Activated CD8-positive, alpha-beta memory T cell treated with anti-CD3 and anti-CD28 coated beads, Interleukin-2, amount 10 ng/mL, durations not matched to agents 7 days and 5 days (primary cell): ENCODE measurements at regions of chr6 and their contacts with region 1.

Region 1: DNA sequence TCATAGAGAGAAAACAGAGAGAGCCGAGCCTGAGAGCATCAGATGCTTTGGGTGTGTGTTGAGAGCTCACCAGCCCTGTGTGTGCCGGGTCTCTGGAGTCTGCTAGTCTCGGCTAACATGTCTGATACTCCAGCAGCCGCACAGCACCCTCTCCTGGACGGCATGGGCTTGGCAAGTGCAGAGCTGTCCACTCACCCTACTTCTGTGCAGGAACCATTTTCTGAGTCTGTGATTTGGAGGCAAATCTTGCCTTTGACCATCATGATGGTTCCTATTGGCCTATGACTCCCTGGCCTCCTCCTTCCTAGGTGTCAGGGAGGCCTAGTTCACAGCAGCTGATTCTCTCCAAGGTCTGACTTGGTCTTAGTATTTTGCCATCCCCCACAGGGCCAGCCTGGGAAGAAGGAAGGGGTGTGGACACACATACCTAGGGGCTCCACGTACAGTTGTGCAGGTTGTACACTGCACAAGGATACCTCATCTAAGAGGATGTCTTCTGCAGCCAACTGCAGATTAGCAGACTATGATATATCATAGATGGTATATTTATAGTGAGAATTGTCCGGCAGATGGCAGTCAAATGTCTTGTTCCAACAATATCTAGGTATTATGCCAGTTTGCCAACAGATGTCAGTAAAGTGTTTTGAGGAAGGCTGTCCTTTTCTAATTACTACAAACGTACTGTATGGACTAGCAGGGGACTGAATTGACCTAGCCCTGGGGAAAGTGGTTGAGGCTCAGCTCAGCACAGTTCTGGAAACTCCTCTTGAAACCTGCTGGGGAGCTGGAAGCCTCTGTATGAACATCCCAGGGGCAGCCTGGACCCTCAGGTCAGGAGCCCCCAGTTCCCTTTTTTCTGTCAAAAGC is 13.0 kb downstream of the FGD2 start:
- DNase-seq: peak; percentile 97
- ATAC-seq: peak; percentile 97
- H3K4me3 Mint-ChIP-seq: peak overlapping the region; percentile 5
- H3K27ac Mint-ChIP-seq: peak overlapping the region; percentile 80
- H3K4me1 Mint-ChIP-seq: peaks cover 52% of the 10 kb centered on the region
- H3K27me3 Mint-ChIP-seq: no peaks in the 10 kb centered on the region

Region 2: DNA sequence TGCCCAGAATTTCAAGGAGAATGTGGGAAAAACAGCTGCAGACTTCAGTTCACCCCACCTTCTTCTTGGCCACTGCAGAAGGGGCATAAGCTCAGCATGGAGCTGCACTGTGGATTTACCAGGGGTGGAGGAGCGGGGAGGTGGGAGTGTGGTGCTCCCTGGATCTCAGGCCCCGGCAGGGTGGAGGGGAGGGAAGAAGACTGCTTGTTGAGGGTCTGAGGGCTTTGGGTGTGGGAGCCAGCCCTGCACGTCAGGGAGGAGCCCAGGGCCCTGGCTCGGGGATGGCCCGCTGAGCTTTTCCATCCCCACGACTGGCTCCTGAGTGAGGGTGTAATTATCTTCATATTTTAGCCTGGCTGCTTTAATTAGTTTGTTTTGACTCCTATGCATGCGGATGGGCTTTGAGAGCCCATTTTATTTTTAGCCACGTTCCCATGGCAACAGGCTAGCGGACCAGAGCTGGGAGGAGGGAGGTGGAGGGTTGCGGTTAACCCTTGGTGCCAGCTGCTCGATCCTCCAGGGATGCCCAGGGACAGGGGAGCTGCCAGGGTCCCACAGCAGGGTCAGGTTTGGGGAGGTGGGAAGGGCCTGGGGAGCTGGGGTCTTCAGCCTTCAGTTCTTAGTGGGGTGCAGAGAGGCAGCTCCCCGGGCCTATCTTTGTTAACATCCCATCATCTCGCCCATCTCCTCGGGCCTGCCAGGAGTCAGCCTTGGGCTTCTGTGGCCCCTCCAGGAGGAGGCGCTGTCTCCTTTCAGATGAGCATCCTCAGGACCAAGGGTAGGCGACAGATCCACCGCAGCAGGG is 252.6 kb before region 1 on chr6:
- CTCF ChIA-PET with region 1: interaction called, 121 read pairs
- DNase-seq: peak; percentile 90
- ATAC-seq: peak; percentile 93
- H3K4me3 Mint-ChIP-seq: no peak overlapping the region
- H3K27ac Mint-ChIP-seq: no peak overlapping the region
- H3K4me1 Mint-ChIP-seq: peaks cover 37% of the 10 kb centered on the region
- H3K27me3 Mint-ChIP-seq: no peaks in the 10 kb centered on the region

Region 3: DNA sequence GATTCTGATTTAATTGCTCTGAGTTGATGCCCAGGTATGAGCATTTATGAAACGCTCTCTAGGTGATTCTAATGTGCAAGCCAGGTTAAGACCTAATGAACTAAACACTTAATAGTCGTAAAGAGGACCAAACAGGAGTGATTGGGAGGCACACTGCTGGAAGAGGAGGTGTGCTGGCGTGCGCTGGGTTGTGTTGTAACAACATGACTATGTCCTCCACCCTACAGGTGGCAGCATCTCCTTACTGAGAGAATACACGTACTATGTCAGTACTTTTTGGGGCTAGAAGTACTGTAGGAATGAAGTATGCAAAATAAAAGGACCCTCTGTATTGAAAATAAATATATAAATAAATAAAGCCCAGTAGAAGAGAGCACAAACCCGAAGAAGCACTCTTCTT is 120.8 kb before region 1 on chr6:
- CTCF ChIA-PET with region 1: interaction called, 18 read pairs
- DNase-seq: no peak
- ATAC-seq: no peak
- H3K4me3 Mint-ChIP-seq: no peak overlapping the region
- H3K27ac Mint-ChIP-seq: no peak overlapping the region
- H3K4me1 Mint-ChIP-seq: peaks cover 10% of the 10 kb centered on the region
- H3K27me3 Mint-ChIP-seq: no peaks in the 10 kb centered on the region

Region 4: GRCh38 chr6:36985808-36986703 is 32.4 kb before region 1 on chr6 and contains the start of gene MTCH1:
- CTCF ChIA-PET with region 1: interaction called, 36 read pairs
- DNase-seq: peak; percentile 89
- ATAC-seq: peak; percentile 90
- H3K4me3 Mint-ChIP-seq: no peak within 1 kb of the TSS
- H3K27ac Mint-ChIP-seq: peak within 1 kb of the TSS; percentile 86
- H3K4me1 Mint-ChIP-seq: peaks cover 20% of the 10 kb centered on the region
- H3K27me3 Mint-ChIP-seq: peaks cover 15% of the 10 kb centered on the region
- total RNA-seq, gene MTCH1: 125 to 167 TPM

Region 5: GRCh38 chr6:37169496-37170272 is 151.3 kb after region 1 on chr6 and contains the start of gene PIM1:
- CTCF ChIA-PET with region 1: interaction called, 424 read pairs
- DNase-seq: peak; percentile 100
- ATAC-seq: peak; percentile 85
- H3K4me3 Mint-ChIP-seq: peak within 1 kb of the TSS; percentile 93
- H3K27ac Mint-ChIP-seq: peak within 1 kb of the TSS; percentile 96
- H3K4me1 Mint-ChIP-seq: peaks cover 30% of the 10 kb centered on the region
- H3K27me3 Mint-ChIP-seq: no peaks in the 10 kb centered on the region
- total RNA-seq, gene PIM1: 361 to 464 TPM

Region 6: GRCh38 chr6:37289931-37290330 is 271.5 kb after region 1 on chr6:
- CTCF ChIA-PET with region 1: interaction called, 10 read pairs
- DNase-seq: peak; percentile 72
- ATAC-seq: peak; percentile 87
- H3K4me3 Mint-ChIP-seq: peak overlapping the region; percentile 8
- H3K27ac Mint-ChIP-seq: peak overlapping the region; percentile 70
- H3K4me1 Mint-ChIP-seq: peaks cover 42% of the 10 kb centered on the region
- H3K27me3 Mint-ChIP-seq: no peaks in the 10 kb centered on the region